Head of caudate nucleus (tissue), 42 donors: ENCODE measurements at regions of chr20 and their contacts with region 1.

Region 1: DNA sequence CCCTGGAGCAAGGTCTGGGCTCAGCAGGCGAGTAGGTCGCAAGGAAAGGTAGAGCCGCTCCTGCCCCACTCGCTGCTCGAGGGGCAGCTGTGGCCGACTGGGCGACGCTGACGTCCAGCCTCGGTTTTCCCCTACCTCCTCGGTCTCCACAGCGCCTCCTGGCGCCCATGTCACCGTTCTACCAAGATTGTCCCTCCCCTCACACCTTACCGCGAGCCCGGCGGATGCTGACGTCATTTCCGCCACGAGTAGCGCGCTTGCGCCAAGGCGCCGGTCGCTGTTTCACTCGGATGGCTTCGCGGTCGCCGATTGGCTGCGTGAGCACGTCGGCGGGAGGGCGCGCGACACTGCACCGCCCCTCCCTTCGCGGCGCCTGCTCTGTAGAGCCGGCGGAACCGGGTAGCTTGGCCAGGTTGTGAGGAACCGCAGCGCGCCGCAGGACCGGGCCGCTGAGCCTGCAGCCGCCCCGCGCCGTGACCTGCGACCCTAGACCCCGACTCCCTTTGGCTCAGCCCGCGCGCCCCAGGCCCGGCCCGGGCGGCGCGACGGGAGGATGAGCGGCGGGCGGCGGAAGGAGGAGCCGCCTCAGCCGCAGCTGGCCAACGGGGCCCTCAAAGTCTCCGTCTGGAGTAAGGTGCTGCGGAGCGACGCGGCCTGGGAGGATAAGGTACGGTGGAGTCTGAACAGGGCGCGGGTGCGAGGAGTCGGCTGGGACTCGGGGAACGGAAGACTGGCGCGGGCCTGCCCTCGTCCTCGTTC is at the start of gene RAB5IF:
- DNase-seq: peak; percentile 91 to 100 (median 97)

Region 2: GRCh38 chr20:36259177-36260061 is 346.2 kb before region 1 on chr20:
- intact Hi-C with region 1: no loop called
- DNase-seq: no peak

Region 3: DNA sequence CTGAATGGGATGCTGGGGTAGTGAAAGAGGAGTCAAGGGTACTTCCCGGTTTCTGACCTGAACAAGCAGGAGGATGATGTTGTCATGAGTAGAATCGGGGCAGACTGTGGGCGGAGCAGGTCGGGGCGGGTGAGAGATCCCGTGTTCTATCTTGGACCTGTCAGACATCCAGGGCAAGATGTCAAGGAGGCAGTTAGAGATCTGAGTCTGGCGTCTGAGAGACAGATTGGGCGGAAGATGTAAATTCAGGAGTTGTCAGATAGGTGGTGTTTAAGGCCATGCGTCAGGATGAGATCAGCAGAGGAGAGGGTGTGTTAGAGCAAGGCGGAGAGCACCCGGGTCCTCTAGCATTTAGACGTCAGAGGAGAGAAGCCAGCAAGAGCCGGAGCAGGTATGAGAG is 183.9 kb before region 1 on chr20:
- intact Hi-C with region 1: no loop called
- DNase-seq: peak in 30 of 42 donors; percentile 14 to 77 (median 42)

Region 4: GRCh38 chr20:36460648-36461599 is 144.7 kb before region 1 on chr20:
- intact Hi-C with region 1: loop called (anchors 10 kb)
- DNase-seq: peak; percentile 69 to 96 (median 91)

Region 5: GRCh38 chr20:36555248-36555647 is 50.3 kb before region 1 on chr20:
- intact Hi-C with region 1: loop called (anchors 5 kb)
- DNase-seq: no peak

Region 6: DNA sequence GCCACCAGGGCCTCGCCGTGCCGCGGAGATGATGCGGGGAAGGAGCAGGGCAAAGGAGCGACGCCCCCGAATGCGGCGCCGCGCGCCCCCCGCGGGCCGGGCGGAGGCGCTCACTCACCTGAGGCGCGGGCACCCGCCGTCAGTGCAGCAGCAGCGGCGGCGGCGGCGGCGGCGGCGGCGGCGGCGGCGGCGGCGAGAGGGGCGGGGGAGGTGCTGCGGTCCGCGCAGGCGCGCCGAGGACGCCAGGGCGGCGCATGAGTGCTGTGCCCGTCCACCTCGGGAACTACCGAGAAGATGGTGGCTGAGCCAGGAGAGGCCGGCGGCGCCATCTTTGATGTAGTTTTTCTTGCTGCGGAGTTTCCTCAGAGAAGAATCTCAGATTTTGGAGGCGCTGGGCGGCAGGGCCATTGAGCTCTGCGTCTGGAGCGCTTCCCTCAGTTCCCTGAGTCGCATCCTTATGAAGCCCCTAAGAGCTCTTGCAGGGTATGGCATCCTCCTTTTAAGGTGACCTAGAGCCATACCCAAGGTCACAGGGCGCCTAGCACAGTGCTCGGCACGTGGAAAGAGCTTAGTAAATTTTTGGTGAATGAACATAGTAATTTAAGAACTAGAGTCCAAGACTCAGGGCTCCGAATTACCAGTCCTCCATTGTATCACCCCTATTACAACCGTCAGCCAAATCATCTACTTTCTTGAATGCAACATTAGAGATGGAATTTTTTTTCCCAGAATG is 140.5 kb after region 1 on chr20 and contains the start of gene NDRG3:
- intact Hi-C with region 1: loop called (anchors 10 kb)
- DNase-seq: peak; percentile 89 to 97 (median 94)

Region 7: DNA sequence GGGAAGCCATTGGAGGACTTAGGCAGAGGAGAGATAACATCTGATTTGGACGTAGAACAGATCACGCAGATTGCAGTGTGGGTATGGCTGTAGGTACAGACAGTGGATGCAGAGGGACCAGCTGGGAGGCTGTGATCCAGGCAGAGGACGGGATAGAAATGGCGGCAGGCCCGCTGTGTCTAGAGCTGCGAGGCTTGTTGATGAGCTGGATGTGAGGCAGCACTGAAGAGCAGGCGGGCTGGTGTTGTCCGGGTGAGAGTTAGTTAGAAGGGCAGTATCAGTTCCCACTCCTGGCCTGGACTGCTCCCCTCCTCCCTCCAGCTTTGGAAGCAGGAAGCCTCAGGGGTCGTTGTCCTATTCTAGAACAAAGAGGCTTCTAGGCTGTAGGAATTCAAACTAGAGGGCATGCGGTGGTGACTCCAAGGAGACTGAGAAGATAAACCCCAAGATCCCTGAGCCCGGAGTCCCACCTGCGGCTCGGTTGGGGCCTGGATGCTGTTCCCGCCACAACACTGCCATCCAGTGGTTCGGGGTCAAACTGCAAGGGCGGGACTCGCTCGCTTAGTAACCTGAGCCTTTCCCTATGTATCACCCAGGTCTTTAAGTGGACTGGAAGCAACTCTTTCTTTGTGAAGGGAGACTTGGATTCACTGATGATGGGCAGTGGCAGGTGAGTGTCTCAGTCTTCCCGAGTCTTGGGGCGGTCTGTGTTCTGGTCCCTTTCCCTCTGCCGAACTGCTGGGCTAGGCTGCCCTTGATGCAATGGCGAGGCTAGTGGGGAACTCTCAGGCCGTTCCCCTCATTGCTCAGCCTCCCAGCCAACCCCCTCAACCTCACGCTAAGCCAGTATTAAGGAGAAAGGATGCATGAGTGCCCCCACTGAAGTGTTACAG is 281.5 kb after region 1 on chr20:
- intact Hi-C with region 1: loop called (anchors 10 kb)
- DNase-seq: peak; percentile 62 to 95 (median 88)